Mammary epithelial cell (primary cell): ENCODE measurements at regions of chr1 and their contacts with region 1.

Region 1: DNA sequence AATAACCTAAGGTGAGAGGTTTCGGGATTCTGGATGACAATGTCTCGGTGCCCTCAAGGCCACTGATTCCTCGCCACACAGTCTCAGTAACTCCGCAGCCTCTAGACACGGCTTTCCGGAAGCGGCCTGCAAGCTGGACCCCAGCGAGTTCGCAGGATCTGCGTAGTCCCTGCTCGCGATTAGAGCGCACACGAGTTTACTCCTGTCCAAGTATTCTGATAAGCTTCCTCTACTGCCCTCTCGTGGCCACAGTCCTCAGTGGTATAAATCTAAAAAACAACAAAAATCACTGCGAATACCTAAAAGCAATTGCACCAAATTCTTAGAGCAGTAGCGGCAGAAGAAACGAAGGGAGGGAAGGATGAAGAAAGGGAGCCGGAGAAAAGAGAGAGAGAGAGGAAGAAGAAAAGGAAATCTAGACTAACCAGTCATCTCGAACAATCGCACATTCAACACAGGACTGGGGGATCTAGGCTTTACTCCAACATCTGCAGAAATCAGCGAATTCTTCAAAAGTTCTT is 1.1 kb upstream of the PLXNA2 start:
- DNase-seq: peak; percentile 75
- H3K4me3 ChIP-seq: peak overlapping the region; percentile 1 to 85 (median 24)
- H3K27ac ChIP-seq: no peak overlapping the region
- H3K4me1 ChIP-seq: peaks cover 31% of the 10 kb centered on the region
- H3K27me3 ChIP-seq: peaks cover 3% of the 10 kb centered on the region
- CTCF ChIP-seq: peak; percentile 64 to 74

Region 2: GRCh38 chr1:207670192-207670591 is 575.1 kb before region 1 on chr1:
- CTCF ChIA-PET with region 1: no interaction called
- dilution Hi-C with region 1: no loop called
- in situ Hi-C with region 1: no loop called
- intact Hi-C with region 1: no loop called
- DNase-seq: no peak
- H3K4me3 ChIP-seq: no peak overlapping the region
- H3K27ac ChIP-seq: no peak overlapping the region
- H3K4me1 ChIP-seq: peaks cover 12% of the 10 kb centered on the region
- H3K27me3 ChIP-seq: peaks cover 20% of the 10 kb centered on the region
- CTCF ChIP-seq: no peak

Region 3: DNA sequence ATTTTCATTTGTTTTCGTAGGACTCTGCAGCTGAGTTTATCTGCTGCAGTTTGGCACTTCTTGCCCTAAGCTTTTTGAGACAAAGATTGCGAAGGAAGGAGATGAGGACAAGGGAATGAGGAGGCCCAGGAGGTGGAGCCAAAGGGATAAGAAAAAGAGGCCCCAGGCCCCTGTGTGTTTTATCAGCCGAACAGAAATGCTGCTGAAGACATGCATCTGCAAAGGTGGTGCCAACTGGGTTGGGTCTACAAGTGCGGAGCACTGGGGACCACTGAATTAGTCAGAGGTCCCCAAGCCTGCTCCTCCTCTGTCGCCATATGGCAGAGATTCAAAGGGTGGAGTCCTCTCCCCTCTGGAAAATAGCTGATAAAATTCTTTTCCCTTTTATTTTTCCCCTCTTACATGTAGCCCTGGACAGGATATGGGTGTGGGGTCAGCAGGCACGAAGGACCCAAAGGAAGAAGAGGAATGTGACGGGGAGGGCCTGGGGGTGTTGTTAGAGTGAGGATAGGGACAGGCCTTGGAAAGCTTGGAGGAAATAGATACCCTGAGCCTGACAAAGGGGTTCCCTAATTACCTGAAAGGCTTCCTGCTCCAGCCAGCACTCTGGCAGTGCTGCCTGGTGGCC is 337.0 kb before region 1 on chr1:
- CTCF ChIA-PET with region 1: no interaction called
- dilution Hi-C with region 1: no loop called
- in situ Hi-C with region 1: no loop called
- intact Hi-C with region 1: no loop called
- DNase-seq: no peak
- H3K4me3 ChIP-seq: no peak overlapping the region
- H3K27ac ChIP-seq: no peak overlapping the region
- H3K4me1 ChIP-seq: peaks cover 7% of the 10 kb centered on the region
- H3K27me3 ChIP-seq: peaks cover 18% of the 10 kb centered on the region
- CTCF ChIP-seq: no peak

Region 4: GRCh38 chr1:208024406-208024805 is 220.8 kb before region 1 on chr1:
- CTCF ChIA-PET with region 1: interaction called, 93 read pairs
- dilution Hi-C with region 1: no loop called
- in situ Hi-C with region 1: loop called (anchors 5 to 10 kb)
- intact Hi-C with region 1: loop called (anchors 1 kb)
- DNase-seq: no peak
- H3K4me3 ChIP-seq: no peak overlapping the region
- H3K27ac ChIP-seq: no peak overlapping the region
- H3K4me1 ChIP-seq: no peaks in the 10 kb centered on the region
- H3K27me3 ChIP-seq: no peaks in the 10 kb centered on the region
- CTCF ChIP-seq: no peak

Region 5: GRCh38 chr1:208093754-208094719 is 151.2 kb before region 1 on chr1:
- CTCF ChIA-PET with region 1: no interaction called
- dilution Hi-C with region 1: no loop called
- in situ Hi-C with region 1: no loop called
- intact Hi-C with region 1: loop called (anchors 1 kb)
- DNase-seq: peak; percentile 37
- H3K4me3 ChIP-seq: no peak overlapping the region
- H3K27ac ChIP-seq: peak overlapping the region; percentile 33
- H3K4me1 ChIP-seq: no peaks in the 10 kb centered on the region
- H3K27me3 ChIP-seq: no peaks in the 10 kb centered on the region
- CTCF ChIP-seq: peak; percentile 81 to 84

Region 6: GRCh38 chr1:208184088-208184911 is 60.9 kb before region 1 on chr1:
- CTCF ChIA-PET with region 1: no interaction called
- dilution Hi-C with region 1: no loop called
- in situ Hi-C with region 1: no loop called
- intact Hi-C with region 1: loop called (anchors 1 kb)
- DNase-seq: peak; percentile 99
- H3K4me3 ChIP-seq: no peak overlapping the region
- H3K27ac ChIP-seq: peak overlapping the region; percentile 57
- H3K4me1 ChIP-seq: peaks cover 37% of the 10 kb centered on the region
- H3K27me3 ChIP-seq: no peaks in the 10 kb centered on the region
- CTCF ChIP-seq: no peak